GM13977 (cell line): ENCODE measurements at regions of chr5 and their contacts with region 1.

Region 1: DNA sequence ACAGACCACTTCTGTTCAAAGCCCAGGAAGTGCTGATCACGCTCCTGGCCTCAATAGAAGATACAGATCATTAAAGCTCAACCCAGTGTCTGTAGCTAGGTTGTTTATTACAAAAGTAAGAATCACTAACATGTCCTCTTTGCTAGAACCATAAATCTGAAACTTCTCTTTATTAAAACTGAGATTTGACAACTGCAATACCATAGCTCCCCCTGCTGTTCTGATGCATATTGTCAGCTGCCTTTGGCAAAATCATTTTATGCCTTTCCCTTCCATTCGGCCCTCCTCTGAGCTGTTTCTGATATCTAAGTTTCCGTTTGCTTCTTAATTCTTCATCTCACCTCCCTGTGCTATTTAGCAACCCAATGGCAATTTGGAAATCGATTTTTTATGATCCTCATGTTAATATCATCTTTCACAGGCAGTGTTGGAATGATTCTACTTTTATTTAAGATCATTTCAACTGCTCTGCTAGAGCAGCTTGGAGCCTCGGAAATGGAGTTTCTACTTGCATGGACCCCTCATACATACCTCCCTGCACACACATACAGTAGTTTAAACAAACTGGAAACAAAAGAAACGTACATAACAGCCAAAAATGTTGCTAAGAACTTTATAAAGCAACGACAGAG is 998.8 kb downstream of the MAT2B start:
- DNase-seq: peak; percentile 21
- CTCF ChIP-seq: peak; percentile 79

Region 2: DNA sequence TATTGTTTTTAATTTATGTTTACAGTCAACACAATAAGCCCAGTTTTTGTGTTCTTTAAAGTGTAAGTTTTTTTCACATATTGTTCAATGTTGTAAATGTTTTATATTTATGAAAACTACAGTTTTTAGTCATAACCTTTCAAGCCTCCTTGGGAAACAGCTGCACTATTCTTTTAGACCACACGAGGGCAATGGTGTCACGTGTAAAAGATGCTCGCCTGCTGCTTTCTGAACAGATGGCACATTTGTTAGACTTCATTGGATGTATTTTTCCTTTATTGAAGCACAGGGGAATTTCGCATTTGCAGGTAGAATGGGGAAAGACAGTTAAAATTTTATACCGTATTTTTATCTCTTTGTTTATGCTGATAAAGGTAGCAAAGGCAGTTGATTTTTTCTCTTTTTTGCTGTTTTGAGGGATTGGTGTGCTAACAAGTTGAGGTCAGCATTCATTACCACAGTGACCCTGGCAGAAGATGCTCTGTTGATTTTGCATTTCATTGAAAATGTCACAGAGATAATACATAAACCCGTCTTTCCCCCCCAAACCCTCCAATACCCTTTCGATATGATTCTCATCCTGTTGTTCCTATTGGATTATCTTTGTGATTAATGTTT is 939.8 kb before region 1 on chr5:
- in situ Hi-C with region 1: loop called (anchors 25 kb)
- DNase-seq: peak; percentile 53
- CTCF ChIP-seq: peak; percentile 87

Region 3: GRCh38 chr5:163695830-163696578 is 808.3 kb before region 1 on chr5:
- in situ Hi-C with region 1: loop called (anchors 25 kb)
- DNase-seq: peak; percentile 6
- CTCF ChIP-seq: peak; percentile 57

Region 4: GRCh38 chr5:164013077-164013670 is 491.1 kb before region 1 on chr5:
- in situ Hi-C with region 1: loop called (anchors 25 kb)
- DNase-seq: peak; percentile 22
- CTCF ChIP-seq: peak; percentile 68

Region 5: DNA sequence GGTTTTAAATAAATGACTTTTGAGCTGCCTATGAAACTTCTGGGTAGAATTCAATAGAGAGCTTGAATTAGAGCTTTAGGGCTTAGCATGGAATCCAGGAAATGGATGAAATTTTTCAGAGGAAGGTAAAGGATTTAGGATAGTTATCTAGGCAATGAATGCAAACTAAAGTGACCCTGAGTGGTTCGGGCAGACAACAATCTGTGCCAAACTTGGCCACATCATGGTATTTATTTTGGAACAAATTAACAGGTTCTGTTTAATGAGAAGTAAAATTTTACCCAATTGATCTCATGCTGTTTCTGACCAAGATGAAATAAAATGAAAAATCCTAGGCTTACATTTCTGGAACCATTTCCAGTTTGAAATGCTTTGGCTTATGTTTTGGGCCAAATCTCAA is 64.5 kb before region 1 on chr5:
- in situ Hi-C with region 1: no loop called
- DNase-seq: no peak
- CTCF ChIP-seq: no peak

Region 6: DNA sequence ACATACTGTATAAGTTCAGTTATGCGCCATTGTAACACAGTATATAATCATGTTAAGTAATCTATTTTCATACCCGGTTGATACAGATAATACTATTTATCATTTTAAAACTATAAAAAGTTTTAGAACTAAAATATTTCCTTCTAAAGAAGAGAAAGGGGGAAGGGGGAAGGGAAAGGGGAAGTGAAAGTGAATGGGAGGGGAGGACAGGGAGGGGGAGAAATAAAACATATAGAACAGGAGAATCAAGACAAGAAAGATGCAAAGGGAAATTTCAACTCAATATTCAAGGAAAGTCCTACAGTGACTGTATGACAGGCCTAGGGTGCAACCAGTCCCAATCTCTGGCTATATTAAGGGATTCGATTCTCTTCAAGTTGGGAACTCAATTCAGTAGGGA is 280.0 kb after region 1 on chr5:
- in situ Hi-C with region 1: no loop called
- DNase-seq: no peak
- CTCF ChIP-seq: no peak